Head of caudate nucleus (tissue), 42 donors: ENCODE measurements at regions of chr11 and their contacts with region 1.

Region 1: DNA sequence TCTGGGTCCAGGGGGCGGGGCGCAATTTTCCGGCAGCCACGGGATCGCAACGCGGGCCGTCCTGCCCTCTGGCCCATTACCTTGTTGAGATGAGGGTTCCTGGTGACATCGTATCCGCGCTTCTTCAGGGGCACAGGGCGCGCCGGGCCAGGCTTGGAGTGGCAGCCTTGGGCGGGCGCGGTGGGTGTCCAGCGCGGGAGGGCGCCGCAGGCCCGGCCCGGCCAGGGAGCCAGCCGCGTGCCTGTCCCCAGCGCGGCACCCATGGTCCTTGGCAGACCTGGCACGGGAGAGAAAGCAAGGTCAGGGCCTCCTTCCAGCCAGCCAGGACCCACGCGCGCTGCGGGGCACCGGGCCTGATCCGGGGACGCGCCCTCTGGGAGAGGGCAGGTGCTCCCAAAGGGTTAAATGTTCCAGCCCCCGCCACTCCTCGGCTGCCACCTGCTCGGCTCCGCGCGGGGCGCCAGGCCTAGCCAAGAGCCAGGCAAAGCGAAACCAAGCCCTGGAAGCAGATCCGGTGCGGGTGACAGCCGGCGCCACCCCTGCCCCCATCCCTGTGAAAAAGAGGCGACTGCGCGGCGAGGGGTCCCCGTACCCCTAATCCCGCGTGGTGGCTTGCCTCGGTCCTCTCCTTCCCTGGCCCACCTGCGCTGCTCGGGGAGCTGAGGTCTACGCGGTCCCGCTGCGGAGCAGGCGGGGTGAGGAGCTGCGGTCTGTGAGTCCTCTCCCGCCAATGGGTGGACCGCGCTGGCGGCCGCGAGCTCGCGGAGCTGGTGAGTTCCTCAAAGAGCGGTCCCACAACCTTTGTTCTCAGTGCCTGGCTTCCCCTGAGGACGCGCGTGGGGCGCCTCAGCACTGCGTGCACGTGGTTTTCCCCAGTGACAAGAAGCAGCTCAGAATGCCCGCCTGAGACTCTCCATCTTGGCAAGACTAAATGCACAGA is at the start of gene ME3:
- DNase-seq: peak; percentile 47 to 90 (median 70)

Region 2: DNA sequence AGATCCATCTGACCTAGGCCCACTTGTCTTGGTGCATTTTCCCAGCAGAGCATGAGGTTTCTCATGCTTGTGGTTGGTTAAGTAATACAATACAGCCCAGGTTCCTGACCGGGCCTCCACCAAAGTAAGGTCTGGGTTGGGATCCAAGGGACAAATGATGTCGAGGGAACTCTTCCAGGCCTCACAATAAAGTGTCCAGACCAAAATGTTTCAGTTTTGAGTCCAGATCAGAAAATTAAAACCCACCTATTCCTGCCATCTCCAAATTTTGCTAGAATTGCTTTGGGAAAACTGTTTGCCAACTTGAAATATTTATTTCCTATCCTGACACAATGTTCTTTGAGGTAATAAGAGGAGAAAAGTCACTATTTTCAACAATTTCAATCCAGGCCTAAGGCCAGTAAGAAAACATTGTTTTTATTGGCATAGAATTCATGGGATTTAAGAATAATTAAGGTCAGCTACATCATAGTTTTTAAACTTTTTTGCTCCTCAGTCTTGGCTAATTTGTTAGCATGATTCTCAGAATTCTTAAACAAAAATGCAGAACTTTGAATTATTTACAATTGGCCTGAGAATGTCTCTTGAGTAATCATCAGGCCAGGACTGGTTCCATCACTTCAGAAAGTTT is 50.9 kb before region 1 on chr11:
- intact Hi-C with region 1: no loop called
- DNase-seq: no peak

Region 3: DNA sequence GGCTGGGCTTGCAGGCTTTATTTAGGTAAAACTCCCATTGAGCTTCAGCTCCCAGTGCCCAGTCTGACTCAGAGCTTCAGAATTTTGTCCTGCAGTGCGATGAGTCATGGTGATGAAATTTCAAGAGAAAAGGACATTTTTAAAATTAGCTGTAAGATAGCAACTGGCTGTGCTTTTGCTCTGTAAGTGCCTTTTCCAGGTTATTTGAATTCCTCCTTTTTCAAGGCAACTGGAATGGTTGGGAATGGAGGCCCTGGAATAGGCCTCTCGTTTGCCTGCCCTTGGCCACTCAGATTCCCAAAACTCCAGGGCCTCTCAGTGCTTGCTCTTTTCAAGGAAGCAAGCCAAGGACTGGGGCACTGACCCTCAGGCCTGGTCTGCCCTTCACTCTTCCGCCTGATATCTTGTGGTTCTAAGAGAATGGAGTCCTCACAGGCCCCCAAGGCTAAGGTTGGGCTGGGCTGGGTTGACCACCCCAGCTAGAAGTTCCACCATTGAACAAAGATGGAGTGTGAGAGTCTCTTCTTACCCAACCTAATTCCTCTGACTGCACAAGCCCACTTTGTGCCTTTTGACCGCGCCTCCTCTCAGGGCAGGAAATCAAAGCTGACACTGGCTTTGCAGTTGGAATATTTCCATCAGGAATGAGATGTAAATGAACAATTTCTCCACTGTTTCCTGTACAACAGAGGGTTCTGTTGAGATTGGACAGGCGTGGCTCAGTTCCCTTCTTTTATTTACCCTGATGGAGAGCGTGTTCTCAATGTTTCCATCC is 68.9 kb after region 1 on chr11:
- intact Hi-C with region 1: loop called (anchors 10 kb)
- DNase-seq: peak in 21 of 42 donors; percentile 19 to 78 (median 34)

Region 4: DNA sequence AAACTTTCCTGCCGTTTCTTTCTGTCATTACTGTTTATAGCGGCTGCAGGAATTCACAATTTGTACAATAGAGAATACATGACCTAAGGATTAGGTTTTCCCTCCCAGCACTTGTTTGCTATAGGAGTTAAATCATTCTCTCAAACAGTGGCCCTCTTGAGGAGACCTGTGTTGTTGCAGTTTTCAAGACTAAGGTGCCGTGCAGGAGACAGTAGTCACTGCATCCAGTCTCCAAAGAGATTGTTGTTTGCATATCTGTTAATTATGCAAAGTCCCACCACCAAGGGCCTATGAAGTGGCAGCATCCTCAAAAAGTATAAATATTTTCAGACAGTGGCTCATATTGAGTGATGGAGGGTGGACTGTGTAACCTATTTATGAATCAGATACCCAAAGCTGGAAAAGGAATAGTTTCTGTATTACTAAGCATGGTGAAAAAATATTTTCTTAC is 130.7 kb after region 1 on chr11:
- intact Hi-C with region 1: loop called (anchors 10 kb)
- DNase-seq: peak in 14 of 42 donors; percentile 10 to 61 (median 34)